B cell (primary cell): ENCODE measurements at regions of chr6 and their contacts with region 1.

Region 1: DNA sequence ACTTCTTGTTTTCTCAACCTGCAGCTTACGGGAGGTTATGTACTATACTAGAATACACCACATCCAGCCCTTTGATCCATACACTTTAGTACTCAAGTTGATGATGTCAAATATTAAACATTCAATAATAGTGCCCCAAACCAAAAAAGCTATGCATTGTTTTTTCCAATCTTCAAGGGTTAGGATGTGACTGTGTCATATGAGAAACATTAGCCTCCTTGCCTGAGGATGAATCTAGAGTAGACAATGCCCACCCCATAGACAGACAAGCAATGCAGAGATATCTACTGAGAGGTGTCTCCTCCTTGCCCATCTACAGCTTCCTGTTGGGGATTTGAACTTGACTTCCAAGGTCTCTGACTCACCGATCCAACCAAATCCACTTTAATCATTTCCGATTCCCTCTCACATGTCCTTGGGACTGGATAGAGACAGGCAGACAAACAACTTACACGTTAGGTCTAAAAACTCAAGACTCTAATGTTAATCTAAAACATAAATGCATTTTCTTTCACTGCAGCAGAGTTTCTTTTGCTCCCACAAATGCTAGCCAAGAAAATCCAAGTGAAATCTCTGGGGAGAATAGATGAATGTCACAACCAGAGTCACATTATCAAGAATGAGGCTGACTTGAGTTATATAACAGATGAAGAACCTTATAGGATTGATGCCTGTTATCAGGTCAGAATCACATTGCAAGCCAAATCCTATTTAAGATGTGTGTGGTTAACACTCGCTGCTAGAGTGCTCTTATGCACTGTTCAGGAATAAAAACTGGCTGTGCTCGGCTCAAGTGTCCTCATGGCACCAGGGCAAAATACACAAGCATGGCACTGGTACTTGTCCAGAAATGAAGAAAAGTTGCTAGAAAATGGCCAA is 75.5 kb upstream of the TNFAIP3 start:
- DNase-seq: no peak
- ATAC-seq: no peak
- H3K4me3 ChIP-seq: no peak overlapping the region
- H3K4me3 Mint-ChIP-seq: peak overlapping the region; percentile 27
- H3K27ac ChIP-seq: peak overlapping the region in 1 of 2 donors; percentile 66
- H3K27ac Mint-ChIP-seq: peak overlapping the region; percentile 86
- H3K4me1 ChIP-seq: peaks cover 23 to 25% of the 10 kb centered on the region in 2 donors
- H3K4me1 Mint-ChIP-seq: peaks cover 41% of the 10 kb centered on the region
- H3K27me3 ChIP-seq: no peaks in the 10 kb centered on the region
- H3K27me3 Mint-ChIP-seq: no peaks in the 10 kb centered on the region
- CTCF ChIP-seq: no peak

Region 2: DNA sequence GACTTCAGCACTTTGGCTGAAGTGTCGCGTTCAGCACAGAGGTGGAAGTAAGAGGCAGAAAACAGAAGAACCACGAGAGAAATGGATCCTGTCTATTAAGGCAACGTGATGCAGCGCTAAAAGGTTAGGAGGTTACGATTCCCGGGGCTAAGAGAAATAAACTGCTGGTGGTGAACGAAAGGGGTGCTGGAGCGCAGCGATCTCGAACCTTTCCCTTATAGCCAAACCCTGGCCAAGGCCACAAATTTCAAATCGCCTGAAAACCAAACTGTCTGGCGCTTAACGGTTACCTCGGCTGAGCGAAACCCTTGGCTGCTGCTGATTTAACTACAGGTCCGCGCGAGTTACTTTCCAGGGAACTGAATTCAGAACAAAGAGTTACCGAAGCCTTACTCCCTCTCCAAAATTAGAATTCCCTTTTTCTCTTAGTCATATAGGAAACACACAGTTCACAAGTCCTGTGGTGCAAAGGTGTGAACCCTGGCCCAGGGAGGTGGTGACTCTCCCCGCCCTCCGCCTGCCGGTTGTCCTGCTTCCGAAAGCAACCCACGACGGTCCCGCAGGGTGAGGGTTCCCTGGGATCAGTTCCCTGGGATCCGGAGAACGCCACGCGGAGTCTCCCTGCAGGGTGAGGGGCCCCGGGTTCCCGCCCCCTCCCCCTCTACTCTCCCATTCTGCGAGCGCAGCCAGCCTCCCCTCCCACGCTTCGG is 870.7 kb before region 1 on chr6:
- CTCF ChIA-PET with region 1: no interaction called
- POLR2A ChIA-PET with region 1: no interaction called
- intact Hi-C with region 1: no loop called
- DNase-seq: peak; percentile 45
- ATAC-seq: no peak
- H3K4me3 ChIP-seq: peak overlapping the region; percentile 35 to 64 (median 51)
- H3K4me3 Mint-ChIP-seq: peak overlapping the region; percentile 77
- H3K27ac ChIP-seq: no peak overlapping the region
- H3K27ac Mint-ChIP-seq: peak overlapping the region; percentile 20
- H3K4me1 ChIP-seq: peaks cover 33 to 38% of the 10 kb centered on the region in 2 donors
- H3K4me1 Mint-ChIP-seq: peaks cover 30% of the 10 kb centered on the region
- H3K27me3 ChIP-seq: peaks cover 0 to 57% (median 32%) of the 10 kb centered on the region in 4 experiments
- H3K27me3 Mint-ChIP-seq: peaks cover 42% of the 10 kb centered on the region
- CTCF ChIP-seq: no peak

Region 3: DNA sequence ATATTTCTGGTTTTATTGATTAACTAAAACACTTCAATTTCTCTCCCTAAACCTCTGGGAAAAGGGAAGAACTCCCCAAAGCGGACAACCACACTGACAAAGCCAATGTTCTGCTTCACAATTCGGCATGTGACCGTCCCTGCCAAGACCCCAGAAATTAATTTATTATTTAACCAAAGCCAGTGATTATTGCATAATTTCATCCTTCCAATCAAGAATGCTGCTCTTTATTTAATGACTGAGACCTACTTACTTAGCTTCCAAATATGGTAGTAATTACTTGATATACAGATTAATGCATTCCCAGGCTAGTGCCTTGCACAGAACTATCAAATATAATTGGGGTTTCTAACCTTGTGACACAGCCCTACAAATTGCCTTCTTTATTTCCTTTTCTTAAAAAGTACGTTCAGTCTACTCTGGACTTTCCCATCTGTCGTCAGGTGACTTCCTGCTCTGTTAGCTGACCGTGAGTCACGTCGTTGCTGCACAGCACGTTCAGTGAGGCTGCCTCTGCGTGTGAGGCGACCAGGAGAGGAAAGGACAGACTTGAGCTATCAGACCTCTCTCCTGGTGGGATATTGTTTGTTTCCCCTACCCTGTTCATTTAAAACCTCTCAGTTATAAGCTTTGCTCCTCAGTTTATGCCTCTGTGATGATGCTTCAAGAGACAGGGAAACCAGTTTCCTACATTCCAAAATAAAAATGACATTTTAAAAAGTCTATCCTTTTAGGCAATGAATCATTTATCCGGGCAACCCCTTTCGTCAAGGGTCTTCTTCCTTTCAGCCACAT is 19.8 kb after region 1 on chr6:
- CTCF ChIA-PET with region 1: no interaction called
- POLR2A ChIA-PET with region 1: no interaction called
- intact Hi-C with region 1: loop called (anchors 2 kb)
- DNase-seq: peak; percentile 92
- ATAC-seq: peak; percentile 98
- H3K4me3 ChIP-seq: peak overlapping the region in 4 of 5 experiments; percentile 14 to 54 (median 26)
- H3K4me3 Mint-ChIP-seq: peak overlapping the region; percentile 73
- H3K27ac ChIP-seq: peak overlapping the region; percentile 85 to 91
- H3K27ac Mint-ChIP-seq: peak overlapping the region; percentile 87
- H3K4me1 ChIP-seq: peaks cover 20 to 26% of the 10 kb centered on the region in 2 donors
- H3K4me1 Mint-ChIP-seq: peaks cover 27% of the 10 kb centered on the region
- H3K27me3 ChIP-seq: no peaks in the 10 kb centered on the region
- H3K27me3 Mint-ChIP-seq: no peaks in the 10 kb centered on the region
- CTCF ChIP-seq: no peak